Natural killer cell (primary cell): ENCODE measurements at regions of chr20 and their contacts with region 1.

Region 1: GRCh38 chr20:35146920-35147574 is at the start of gene EDEM2:
- DNase-seq: peak; percentile 89 to 98
- ATAC-seq: peak; percentile 88 to 94 (median 91)
- H3K4me3 ChIP-seq: peak within 1 kb of the TSS; percentile 68
- H3K4me3 Mint-ChIP-seq: peak within 1 kb of the TSS; percentile 93
- H3K27ac ChIP-seq: peak within 1 kb of the TSS; percentile 46
- H3K27ac Mint-ChIP-seq: peak within 1 kb of the TSS; percentile 93 to 94
- H3K4me1 ChIP-seq: peaks cover 21% of the 10 kb centered on the region
- H3K4me1 Mint-ChIP-seq: peaks cover 22 to 36% of the 10 kb centered on the region in 2 donors
- H3K27me3 ChIP-seq: no peaks in the 10 kb centered on the region
- H3K27me3 Mint-ChIP-seq: no peaks in the 10 kb centered on the region
- CTCF ChIP-seq: no peak
- total RNA-seq, gene EDEM2: 20.0 to 27.4 (median 25.3) TPM

Region 2: GRCh38 chr20:35092524-35093266 is 54.4 kb before region 1 on chr20 and contains the start of gene TRPC4AP:
- intact Hi-C with region 1: loop called (anchors 2 kb)
- DNase-seq: peak; percentile 87 to 95
- ATAC-seq: peak; percentile 94 to 99 (median 96)
- H3K4me3 ChIP-seq: peak within 1 kb of the TSS; percentile 95
- H3K4me3 Mint-ChIP-seq: peak within 1 kb of the TSS; percentile 96
- H3K27ac ChIP-seq: peak within 1 kb of the TSS; percentile 75
- H3K27ac Mint-ChIP-seq: peak within 1 kb of the TSS; percentile 82 to 89
- H3K4me1 ChIP-seq: peaks cover 24% of the 10 kb centered on the region
- H3K4me1 Mint-ChIP-seq: peaks cover 37 to 41% of the 10 kb centered on the region in 2 donors
- H3K27me3 ChIP-seq: no peaks in the 10 kb centered on the region
- H3K27me3 Mint-ChIP-seq: no peaks in the 10 kb centered on the region
- CTCF ChIP-seq: peak; percentile 95
- total RNA-seq, gene TRPC4AP: 72.3 to 79.0 (median 74.4) TPM

Region 3: GRCh38 chr20:35269055-35269781 is 122.2 kb after region 1 on chr20:
- intact Hi-C with region 1: loop called (anchors 1 kb)
- DNase-seq: peak; percentile 48 to 73
- ATAC-seq: peak; percentile 64 to 87 (median 83)
- H3K4me3 ChIP-seq: no peak overlapping the region
- H3K4me3 Mint-ChIP-seq: no peak overlapping the region
- H3K27ac ChIP-seq: no peak overlapping the region
- H3K27ac Mint-ChIP-seq: no peak overlapping the region
- H3K4me1 ChIP-seq: no peaks in the 10 kb centered on the region
- H3K4me1 Mint-ChIP-seq: peaks cover 4 to 6% of the 10 kb centered on the region in 2 donors
- H3K27me3 ChIP-seq: no peaks in the 10 kb centered on the region
- H3K27me3 Mint-ChIP-seq: no peaks in the 10 kb centered on the region
- CTCF ChIP-seq: peak; percentile 68

Region 4: GRCh38 chr20:35447082-35447789 is 300.2 kb after region 1 on chr20:
- intact Hi-C with region 1: loop called (anchors 10 kb)
- DNase-seq: peak; percentile 90 to 92
- ATAC-seq: peak; percentile 96 to 100 (median 99)
- H3K4me3 ChIP-seq: peak overlapping the region; percentile 21
- H3K4me3 Mint-ChIP-seq: peak overlapping the region; percentile 90
- H3K27ac ChIP-seq: no peak overlapping the region
- H3K27ac Mint-ChIP-seq: peak overlapping the region in 1 of 2 donors; percentile 77
- H3K4me1 ChIP-seq: peaks cover 3% of the 10 kb centered on the region
- H3K4me1 Mint-ChIP-seq: peaks cover 5% of the 10 kb centered on the region in 2 donors
- H3K27me3 ChIP-seq: no peaks in the 10 kb centered on the region
- H3K27me3 Mint-ChIP-seq: peaks cover 0 to 4% of the 10 kb centered on the region in 2 donors
- CTCF ChIP-seq: peak; percentile 88

Region 5: GRCh38 chr20:35796571-35796970 is 649.5 kb after region 1 on chr20:
- intact Hi-C with region 1: no loop called
- DNase-seq: peak in 1 of 2 donors; percentile 64
- ATAC-seq: peak; percentile 89 to 92 (median 91)
- H3K4me3 ChIP-seq: no peak overlapping the region
- H3K4me3 Mint-ChIP-seq: peak overlapping the region; percentile 35
- H3K27ac ChIP-seq: peak overlapping the region; percentile 93
- H3K27ac Mint-ChIP-seq: peak overlapping the region; percentile 77 to 94
- H3K4me1 ChIP-seq: peaks cover 19% of the 10 kb centered on the region
- H3K4me1 Mint-ChIP-seq: peaks cover 35 to 39% of the 10 kb centered on the region in 2 donors
- H3K27me3 ChIP-seq: no peaks in the 10 kb centered on the region
- H3K27me3 Mint-ChIP-seq: no peaks in the 10 kb centered on the region
- CTCF ChIP-seq: no peak